T-cell (primary cell): ENCODE measurements at regions of chr3 and their contacts with region 1.

Region 1: GRCh38 chr3:49689046-49689907 is at the starts of genes MST1 and RNF123:
- DNase-seq: peak; percentile 82 to 97 (median 90)
- ATAC-seq: peak; percentile 78 to 83 (median 80)
- H3K4me3 ChIP-seq: peak within 1 kb of the TSS; percentile 94 to 99
- H3K4me3 Mint-ChIP-seq: peak within 1 kb of the TSS; percentile 93 to 97 (median 96)
- H3K27ac ChIP-seq: peak within 1 kb of the TSS; percentile 75
- H3K27ac Mint-ChIP-seq: peak within 1 kb of the TSS; percentile 94 to 97
- H3K4me1 ChIP-seq: peaks cover 6 to 52% of the 10 kb centered on the region in 2 experiments
- H3K4me1 Mint-ChIP-seq: peaks cover 45 to 57% (median 54%) of the 10 kb centered on the region in 3 donors
- H3K27me3 ChIP-seq: peaks cover 0 to 20% of the 10 kb centered on the region in 2 experiments
- H3K27me3 Mint-ChIP-seq: peaks cover 0 to 4% of the 10 kb centered on the region in 2 donors
- total RNA-seq, gene MST1: 9.9 to 16.1 (median 12.6) TPM
- total RNA-seq, gene RNF123: 40.9 to 79.8 (median 72.8) TPM

Region 2: GRCh38 chr3:48609088-48610005 is 1079.9 kb before region 1 on chr3 and contains the start of gene UQCRC1:
- CTCF ChIA-PET with region 1: interaction called in 1 of 2 experiments, 10 read pairs
- POLR2A ChIA-PET with region 1: no interaction called
- DNase-seq: peak; percentile 82 to 96 (median 89)
- ATAC-seq: peak; percentile 99 to 100 (median 99)
- H3K4me3 ChIP-seq: peak within 1 kb of the TSS; percentile 95 to 97
- H3K4me3 Mint-ChIP-seq: peak within 1 kb of the TSS; percentile 98 to 99 (median 98)
- H3K27ac ChIP-seq: peak within 1 kb of the TSS; percentile 76
- H3K27ac Mint-ChIP-seq: peak within 1 kb of the TSS; percentile 95 to 96
- H3K4me1 ChIP-seq: peaks cover 5 to 14% of the 10 kb centered on the region in 2 experiments
- H3K4me1 Mint-ChIP-seq: peaks cover 13 to 19% (median 17%) of the 10 kb centered on the region in 3 donors
- H3K27me3 ChIP-seq: no peaks in the 10 kb centered on the region
- H3K27me3 Mint-ChIP-seq: no peaks in the 10 kb centered on the region
- total RNA-seq, gene UQCRC1: 93.0 to 109 (median 98.4) TPM